Esophagus muscularis mucosa (tissue), 4 donors: ENCODE measurements at regions of chr14 and their contacts with region 1.

Region 1: DNA sequence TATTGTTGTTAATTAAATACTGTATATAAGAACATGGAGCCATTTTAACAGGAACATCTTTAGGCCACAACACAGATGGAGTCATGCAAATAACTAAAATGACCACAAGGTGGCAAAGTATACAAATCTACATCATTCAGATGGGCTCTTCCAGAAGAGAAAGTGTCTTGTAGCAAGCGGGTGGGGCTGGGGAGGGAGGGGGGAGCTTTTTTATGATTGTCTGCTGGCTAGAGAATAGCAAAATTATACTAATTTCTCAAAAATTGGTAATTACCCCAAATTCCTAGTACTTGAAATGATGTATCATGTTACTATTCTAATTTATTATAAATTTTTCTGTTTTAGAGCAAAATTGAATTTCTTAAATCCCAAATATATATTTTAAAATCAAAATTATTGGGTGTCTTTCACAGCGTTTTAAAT is 378.7 kb downstream of the PRKD1 start:
- DNase-seq: no peak
- H3K4me3 ChIP-seq: no peak overlapping the region
- H3K27ac ChIP-seq: no peak overlapping the region
- H3K4me1 ChIP-seq: peaks cover 0 to 18% (median 9%) of the 10 kb centered on the region in 4 donors
- H3K27me3 ChIP-seq: no peaks in the 10 kb centered on the region
- CTCF ChIP-seq: peak; percentile 56 to 70 (median 70)
- EP300 ChIP-seq: no peak
- POLR2A ChIP-seq: no peak

Region 2: GRCh38 chr14:29759521-29760340 is 210.8 kb after region 1 on chr14:
- intact Hi-C with region 1: no loop called
- DNase-seq: no peak
- H3K4me3 ChIP-seq: no peak overlapping the region
- H3K27ac ChIP-seq: no peak overlapping the region
- H3K4me1 ChIP-seq: peaks cover 0 to 7% (median 0%) of the 10 kb centered on the region in 4 donors
- H3K27me3 ChIP-seq: no peaks in the 10 kb centered on the region
- CTCF ChIP-seq: no peak
- EP300 ChIP-seq: no peak
- POLR2A ChIP-seq: no peak

Region 3: DNA sequence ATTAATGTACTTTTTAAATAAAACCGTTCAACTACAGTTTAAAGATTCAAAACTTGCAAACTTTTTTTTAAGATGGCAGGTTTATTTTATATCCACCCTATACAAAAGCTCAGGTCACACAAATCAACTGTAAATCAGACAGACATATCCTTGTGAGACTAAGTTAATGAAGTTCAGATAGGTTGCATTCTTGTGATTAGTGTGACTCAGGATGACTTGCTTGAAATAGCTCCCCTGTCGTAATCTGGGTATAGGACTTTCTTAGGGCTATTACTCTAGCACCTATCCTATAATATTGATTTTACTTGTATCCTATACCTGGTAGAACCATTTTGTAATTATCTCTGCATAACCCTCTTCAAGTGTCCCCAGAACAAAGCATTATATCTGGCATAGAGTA is 388.2 kb after region 1 on chr14:
- intact Hi-C with region 1: no loop called
- DNase-seq: no peak
- H3K4me3 ChIP-seq: no peak overlapping the region
- H3K27ac ChIP-seq: no peak overlapping the region
- H3K4me1 ChIP-seq: no peaks in the 10 kb centered on the region
- H3K27me3 ChIP-seq: no peaks in the 10 kb centered on the region
- CTCF ChIP-seq: no peak
- EP300 ChIP-seq: no peak
- POLR2A ChIP-seq: no peak

Region 4: DNA sequence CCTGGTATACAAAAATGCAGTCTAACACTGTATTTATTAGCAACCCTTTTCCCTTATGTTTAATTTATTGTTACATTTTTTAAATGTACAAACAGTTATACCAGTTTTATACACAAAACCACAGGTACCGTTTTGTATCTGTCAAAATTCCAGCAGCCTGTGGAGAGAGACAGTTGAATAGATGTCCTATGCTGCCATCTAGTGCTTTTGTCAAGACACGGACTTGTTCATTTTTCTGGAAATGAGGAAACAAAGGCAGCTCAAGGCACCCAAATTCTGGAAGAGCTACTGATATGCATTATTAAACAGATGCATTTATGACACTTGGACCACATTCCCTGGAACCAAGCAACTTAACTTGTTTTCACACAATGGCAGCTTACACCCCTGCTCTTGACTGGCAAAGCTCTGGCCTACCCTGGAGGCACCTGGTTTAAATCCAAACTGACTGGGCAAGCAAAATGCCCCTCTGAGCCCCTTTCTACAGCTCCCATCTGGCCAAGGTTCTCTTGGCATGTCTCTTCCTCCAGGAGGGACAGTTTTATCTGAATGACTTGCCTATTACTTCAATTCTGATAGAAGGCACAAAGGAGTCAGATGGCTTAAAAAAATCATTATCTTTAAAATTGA is 665.6 kb after region 1 on chr14:
- intact Hi-C with region 1: loop called (anchors 5 kb)
- DNase-seq: no peak
- H3K4me3 ChIP-seq: no peak overlapping the region
- H3K27ac ChIP-seq: no peak overlapping the region
- H3K4me1 ChIP-seq: peaks cover 0 to 17% (median 14%) of the 10 kb centered on the region in 4 donors
- H3K27me3 ChIP-seq: no peaks in the 10 kb centered on the region
- CTCF ChIP-seq: peak; percentile 63 to 67 (median 64)
- EP300 ChIP-seq: no peak
- POLR2A ChIP-seq: no peak

Region 5: DNA sequence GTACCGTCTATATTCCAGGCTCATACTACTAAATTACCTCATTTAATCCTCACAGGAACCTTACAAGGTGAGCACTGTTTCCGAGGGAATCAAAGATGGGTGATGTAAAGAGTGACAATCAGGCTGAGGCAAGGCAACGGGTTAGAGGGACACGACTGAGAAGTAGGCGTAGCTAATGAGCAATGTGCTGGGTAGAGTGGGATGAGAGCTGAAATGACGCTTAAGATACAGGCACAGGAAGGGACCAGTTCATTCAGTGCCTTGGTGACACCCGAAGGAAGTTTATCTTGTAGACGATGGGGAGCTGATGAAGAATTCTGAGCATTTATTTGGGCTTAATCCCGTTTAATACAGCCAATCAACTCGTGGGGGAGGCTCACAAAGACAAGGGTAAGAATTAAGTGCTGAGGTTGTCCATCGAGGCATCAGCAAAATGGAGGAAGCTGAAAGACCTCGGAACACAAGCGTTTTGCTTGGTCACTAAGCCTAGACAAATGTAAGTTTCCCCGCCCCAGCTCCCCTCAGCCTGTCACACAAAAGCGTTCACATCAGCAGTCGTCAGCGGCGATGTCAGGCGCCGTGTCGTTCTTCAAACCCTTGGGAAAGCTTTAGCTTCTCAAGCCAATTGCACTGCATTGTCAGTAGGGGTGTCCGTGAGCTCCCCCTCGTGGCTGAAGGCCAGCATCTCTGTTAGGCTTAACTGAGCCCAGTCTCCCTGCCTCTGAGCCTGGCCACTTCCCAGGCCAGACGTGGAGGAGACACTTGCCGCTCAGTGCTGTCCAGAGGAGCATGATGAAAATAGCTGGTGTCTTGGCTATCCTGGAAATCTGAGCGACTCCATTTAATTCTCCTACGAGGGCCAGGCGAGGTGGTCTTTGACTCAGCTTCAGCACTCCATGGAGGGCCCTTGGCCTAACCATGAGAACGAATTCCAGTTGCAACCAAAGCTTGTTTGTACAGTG is 721.5 kb after region 1 on chr14:
- intact Hi-C with region 1: loop called (anchors 5 kb)
- DNase-seq: peak; percentile 94
- H3K4me3 ChIP-seq: peak overlapping the region in 3 of 4 donors; percentile 30 to 46 (median 32)
- H3K27ac ChIP-seq: peak overlapping the region in 1 of 4 donors; percentile 31
- H3K4me1 ChIP-seq: peaks cover 0 to 27% (median 18%) of the 10 kb centered on the region in 4 donors
- H3K27me3 ChIP-seq: no peaks in the 10 kb centered on the region
- CTCF ChIP-seq: peak; percentile 69 to 89 (median 74)
- EP300 ChIP-seq: no peak
- POLR2A ChIP-seq: no peak